Right lobe of liver (tissue), 6 donors: ENCODE measurements at regions of chr10 and their contacts with region 1.

Region 1: GRCh38 chr10:114694752-114695151 is 36.7 kb upstream of the ABLIM1 start:
- DNase-seq: peak; percentile 35 to 64 (median 57)
- ATAC-seq: peak; percentile 90 to 97 (median 94)
- H3K4me3 ChIP-seq: no peak overlapping the region
- H3K27ac ChIP-seq: no peak overlapping the region
- H3K4me1 ChIP-seq: no peaks in the 10 kb centered on the region
- H3K27me3 ChIP-seq: no peaks in the 10 kb centered on the region
- CTCF ChIP-seq: peak; percentile 47 to 81 (median 68)
- POLR2A ChIP-seq: no peak

Region 2: DNA sequence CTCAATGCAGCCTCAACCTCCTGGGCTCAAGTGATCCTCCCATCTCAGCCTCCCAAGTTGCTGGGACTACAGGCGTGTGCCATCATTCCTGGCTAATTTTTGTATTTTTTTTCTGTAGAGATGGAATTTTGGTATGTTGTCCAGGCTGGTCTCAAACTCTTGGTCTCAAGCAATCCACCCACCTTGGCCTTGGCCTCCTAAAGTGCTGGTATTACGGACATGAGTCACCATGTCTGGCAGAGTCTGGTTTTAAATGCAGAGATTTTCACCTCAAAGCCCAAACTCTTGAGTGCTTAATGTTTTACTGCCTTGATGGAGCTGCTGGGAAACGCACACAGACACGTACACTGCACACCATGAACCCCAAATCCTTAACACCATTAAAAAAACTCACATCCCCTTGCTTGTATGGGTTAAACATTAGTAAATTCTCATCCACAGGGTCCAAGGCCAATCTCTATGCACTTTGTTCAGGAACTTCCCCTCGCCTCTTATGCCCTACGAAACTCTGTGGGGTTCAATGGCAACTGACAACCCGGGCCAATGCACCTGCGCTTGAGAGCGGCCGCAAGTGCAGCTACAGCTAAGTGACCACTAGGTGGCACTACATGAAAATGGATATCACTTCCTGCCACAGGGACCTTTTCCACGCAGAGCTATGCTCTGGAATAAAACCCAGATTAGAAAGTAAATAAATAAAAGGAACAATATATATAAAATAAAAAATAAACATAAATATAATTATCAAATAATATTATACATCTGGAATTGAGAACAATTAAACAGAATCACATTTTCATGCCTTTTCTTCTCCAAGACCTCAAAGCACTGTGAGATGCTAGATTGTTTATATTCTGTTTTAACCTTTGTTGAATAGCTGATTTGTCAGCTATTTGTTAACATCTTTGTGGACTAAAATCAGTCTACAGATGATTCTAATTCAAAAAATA is 223.5 kb before region 1 on chr10:
- intact Hi-C with region 1: loop called in 1 of 2 experiments (anchors 10 kb)
- DNase-seq: peak; percentile 60 to 77 (median 64)
- ATAC-seq: peak; percentile 85 to 90 (median 86)
- H3K4me3 ChIP-seq: no peak overlapping the region
- H3K27ac ChIP-seq: peak overlapping the region in 1 of 3 donors; percentile 61
- H3K4me1 ChIP-seq: peaks cover 0 to 37% (median 12%) of the 10 kb centered on the region in 4 donors
- H3K27me3 ChIP-seq: no peaks in the 10 kb centered on the region
- CTCF ChIP-seq: peak; percentile 72 to 96 (median 93)
- POLR2A ChIP-seq: no peak